A673 (cell line): ENCODE measurements at regions of chr3 and their contacts with region 1.

Region 1: DNA sequence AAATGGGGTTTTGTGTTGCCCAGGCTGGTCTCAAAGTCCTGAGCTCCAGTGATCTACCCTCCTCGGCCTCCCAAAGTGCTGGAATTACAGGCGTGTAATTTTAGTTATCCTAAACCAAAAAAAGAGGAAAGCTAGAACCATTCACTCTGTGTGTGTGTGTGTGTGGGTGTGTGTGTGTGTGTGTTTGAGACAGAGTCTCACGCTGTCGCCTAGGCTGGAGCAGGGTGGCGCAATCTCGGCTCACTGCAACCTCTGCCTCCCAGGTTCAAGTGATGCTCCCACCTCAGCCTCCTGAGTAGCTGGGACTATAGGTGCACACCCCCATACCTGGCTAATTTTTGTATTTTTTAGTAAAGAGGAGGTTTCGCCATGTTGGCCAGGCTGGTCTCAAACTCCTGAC is 84.0 kb downstream of the TFDP2 start:
- DNase-seq: no peak
- H3K4me3 ChIP-seq: no peak overlapping the region
- H3K27ac ChIP-seq: no peak overlapping the region
- H3K4me1 ChIP-seq: no peaks in the 10 kb centered on the region
- H3K27me3 ChIP-seq: no peaks in the 10 kb centered on the region
- CTCF ChIP-seq: no peak

Region 2: GRCh38 chr3:142077849-142078500 is 12.6 kb after region 1 on chr3:
- CTCF ChIA-PET with region 1: interaction called, 10 read pairs
- POLR2A ChIA-PET with region 1: no interaction called
- intact Hi-C with region 1: no loop called
- DNase-seq: no peak
- H3K4me3 ChIP-seq: no peak overlapping the region
- H3K27ac ChIP-seq: no peak overlapping the region
- H3K4me1 ChIP-seq: no peaks in the 10 kb centered on the region
- H3K27me3 ChIP-seq: no peaks in the 10 kb centered on the region
- CTCF ChIP-seq: no peak